ENCODE measurements at regions of chr9 and their contacts with region 1.

Region 1: DNA sequence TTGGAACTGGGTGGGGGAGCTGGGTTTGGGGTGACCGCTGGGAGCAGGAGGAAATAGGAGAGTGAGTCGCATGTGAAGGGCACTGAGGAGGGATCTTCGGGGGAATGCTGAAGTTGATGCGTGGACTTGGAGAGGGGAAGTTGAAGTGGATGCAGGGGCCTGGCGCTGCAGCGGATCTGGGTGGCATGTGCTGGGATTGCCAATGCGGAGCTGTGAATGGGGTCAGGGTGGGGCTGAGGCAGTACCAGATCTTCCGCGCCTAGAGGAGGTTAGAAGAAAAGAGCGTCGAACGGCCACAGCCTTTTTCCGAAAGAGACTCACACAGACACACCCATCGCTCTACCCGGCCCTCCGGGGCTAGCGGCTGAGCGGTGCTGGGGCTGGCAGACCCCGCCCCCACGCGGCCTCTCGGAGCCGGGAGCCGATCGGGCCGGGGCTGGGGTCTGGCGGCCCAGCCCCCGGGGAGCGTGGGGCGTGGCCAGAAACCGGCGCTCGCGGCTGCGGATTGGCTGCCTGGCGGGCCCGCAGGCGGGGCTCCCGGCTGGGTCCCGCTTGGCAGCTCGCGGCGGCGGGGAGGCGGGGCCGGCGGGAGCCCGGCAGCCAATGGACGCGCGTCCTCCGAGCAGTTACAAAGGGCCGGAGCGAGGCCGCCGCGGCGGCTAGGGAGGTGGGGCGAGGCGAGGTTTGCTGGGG is at the start of gene TGFBR1:
- DNase-seq: peak; percentile 91
- H3K4me3 Mint-ChIP-seq: peak within 1 kb of the TSS; percentile 87
- H3K27ac Mint-ChIP-seq: peak within 1 kb of the TSS; percentile 96
- H3K4me1 Mint-ChIP-seq: peaks cover 64% of the 10 kb centered on the region
- H3K27me3 Mint-ChIP-seq: no peaks in the 10 kb centered on the region
- total RNA-seq, gene TGFBR1: 60.7 to 71.2 TPM

Region 2: DNA sequence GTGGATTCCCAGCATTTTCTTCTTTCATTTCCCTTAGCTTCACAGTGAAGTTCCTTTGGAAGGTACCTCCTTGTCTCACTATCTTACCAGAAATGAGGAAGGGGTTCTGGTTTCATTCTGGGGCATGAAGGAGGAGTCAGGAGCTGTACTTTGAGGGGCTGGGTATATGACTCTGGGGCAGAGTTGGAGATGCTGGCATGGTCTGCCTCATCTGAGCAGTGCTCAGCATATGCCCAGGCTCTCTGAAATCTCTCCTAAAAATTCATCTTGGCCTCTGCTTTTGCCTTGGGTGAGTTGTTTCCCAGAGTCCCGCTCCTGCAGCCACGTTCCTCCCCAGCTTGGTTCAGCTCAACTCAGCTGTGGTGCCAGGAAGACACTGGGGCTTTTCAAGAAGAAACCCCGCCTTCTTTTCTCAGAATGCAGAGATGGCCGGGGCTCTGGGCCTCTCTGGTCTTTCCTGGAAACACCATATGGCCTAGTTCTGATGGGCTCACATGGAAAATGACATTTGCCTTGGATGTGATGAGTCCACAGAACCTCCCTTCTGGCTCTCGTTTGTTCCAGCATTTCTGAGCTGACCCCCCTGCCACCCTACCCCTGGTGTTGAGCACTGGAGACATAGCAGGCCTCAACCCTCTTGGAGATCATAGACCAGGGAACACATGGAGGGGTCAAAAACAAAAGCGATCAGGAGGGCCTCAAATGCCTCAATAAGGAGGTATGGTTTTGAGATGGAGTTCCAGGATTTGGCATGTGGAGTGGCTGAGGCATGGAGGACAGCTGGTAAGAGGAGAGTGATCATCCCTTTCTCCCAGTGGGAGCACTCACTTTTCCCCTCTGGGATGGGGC is 11.7 kb before region 1 on chr9:
- CTCF ChIA-PET with region 1: interaction called, 53 read pairs
- POLR2A ChIA-PET with region 1: interaction called, 5 read pairs
- DNase-seq: peak; percentile 64
- H3K4me3 Mint-ChIP-seq: peak overlapping the region; percentile 32
- H3K27ac Mint-ChIP-seq: peak overlapping the region; percentile 95
- H3K4me1 Mint-ChIP-seq: peaks cover 71% of the 10 kb centered on the region
- H3K27me3 Mint-ChIP-seq: no peaks in the 10 kb centered on the region

Region 3: DNA sequence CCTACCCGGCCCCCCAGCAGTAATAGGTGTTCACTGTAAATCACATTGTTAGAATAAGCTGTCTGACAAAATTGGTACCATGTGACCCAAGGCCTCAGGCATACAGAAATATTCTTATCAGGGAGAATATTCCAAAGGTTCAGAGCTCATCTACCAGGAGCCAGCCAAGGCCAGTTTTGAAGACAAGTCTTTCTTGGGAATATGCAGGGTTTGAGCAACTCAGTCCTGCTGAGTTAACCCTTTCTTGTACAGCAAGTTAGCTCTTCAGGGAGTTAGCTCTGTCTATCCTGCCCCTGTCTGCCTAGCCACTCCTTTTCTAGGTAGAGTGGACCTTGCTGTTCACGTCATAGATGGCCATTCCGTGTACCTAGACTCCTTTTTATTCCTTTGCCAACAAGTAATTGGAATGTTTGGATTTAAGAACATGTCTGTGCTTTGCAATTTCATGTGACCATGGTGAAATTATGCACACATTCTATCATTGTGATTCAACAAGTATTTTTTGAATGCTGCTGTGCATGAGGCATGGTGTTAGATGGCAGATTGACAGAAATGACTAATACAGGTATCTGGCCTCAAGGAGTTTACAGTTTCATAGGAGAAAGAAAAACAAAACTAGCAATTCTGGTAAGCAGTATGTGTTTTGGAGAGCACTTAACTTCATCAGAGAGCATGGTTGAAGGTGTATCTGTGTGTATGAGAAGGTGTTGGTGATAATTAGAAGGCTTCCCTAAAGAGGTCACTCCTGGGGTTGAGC is 22.9 kb after region 1 on chr9:
- CTCF ChIA-PET with region 1: interaction called, 10 read pairs
- POLR2A ChIA-PET with region 1: no interaction called
- DNase-seq: no peak
- H3K4me3 Mint-ChIP-seq: no peak overlapping the region
- H3K27ac Mint-ChIP-seq: peak overlapping the region; percentile 16
- H3K4me1 Mint-ChIP-seq: peaks cover 76% of the 10 kb centered on the region
- H3K27me3 Mint-ChIP-seq: no peaks in the 10 kb centered on the region